ENCODE measurements at regions of chr1 and their contacts with region 1.

Region 1: DNA sequence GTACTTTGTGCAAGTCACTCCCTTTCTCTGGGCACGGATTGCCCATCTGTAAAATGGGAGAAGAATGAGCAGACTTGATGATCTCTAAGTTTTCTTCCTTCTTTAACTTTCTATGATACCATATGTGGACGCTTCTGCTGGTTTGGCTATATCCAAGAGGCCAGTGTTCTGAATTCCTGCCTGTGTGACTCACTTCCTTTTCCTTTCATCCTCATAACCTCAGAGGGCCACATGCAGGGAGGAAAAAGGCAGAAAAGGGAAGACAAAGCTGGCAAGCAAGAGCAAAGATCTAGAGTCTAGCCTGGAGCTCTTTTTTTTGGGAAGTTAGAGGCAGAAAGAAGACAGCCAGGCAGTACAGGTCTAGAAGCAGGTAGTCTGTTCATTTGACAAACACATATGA is 151.2 kb downstream of the OMA1 start:
- DNase-seq: peak; percentile 78
- H3K4me3 ChIP-seq: no peak overlapping the region
- H3K27ac ChIP-seq: peak overlapping the region; percentile 84
- H3K4me1 ChIP-seq: peaks cover 25% of the 10 kb centered on the region
- H3K27me3 ChIP-seq: no peaks in the 10 kb centered on the region
- CTCF ChIP-seq: no peak
- POLR2A ChIP-seq: no peak

Region 2: GRCh38 chr1:58367217-58367616 is 28.1 kb before region 1 on chr1:
- CTCF ChIA-PET with region 1: no interaction called
- POLR2A ChIA-PET with region 1: no interaction called
- dilution Hi-C with region 1: no loop called
- intact Hi-C with region 1: no loop called
- DNase-seq: no peak
- H3K4me3 ChIP-seq: no peak overlapping the region
- H3K27ac ChIP-seq: no peak overlapping the region
- H3K4me1 ChIP-seq: no peaks in the 10 kb centered on the region
- H3K27me3 ChIP-seq: no peaks in the 10 kb centered on the region
- CTCF ChIP-seq: no peak
- POLR2A ChIP-seq: no peak

Region 3: DNA sequence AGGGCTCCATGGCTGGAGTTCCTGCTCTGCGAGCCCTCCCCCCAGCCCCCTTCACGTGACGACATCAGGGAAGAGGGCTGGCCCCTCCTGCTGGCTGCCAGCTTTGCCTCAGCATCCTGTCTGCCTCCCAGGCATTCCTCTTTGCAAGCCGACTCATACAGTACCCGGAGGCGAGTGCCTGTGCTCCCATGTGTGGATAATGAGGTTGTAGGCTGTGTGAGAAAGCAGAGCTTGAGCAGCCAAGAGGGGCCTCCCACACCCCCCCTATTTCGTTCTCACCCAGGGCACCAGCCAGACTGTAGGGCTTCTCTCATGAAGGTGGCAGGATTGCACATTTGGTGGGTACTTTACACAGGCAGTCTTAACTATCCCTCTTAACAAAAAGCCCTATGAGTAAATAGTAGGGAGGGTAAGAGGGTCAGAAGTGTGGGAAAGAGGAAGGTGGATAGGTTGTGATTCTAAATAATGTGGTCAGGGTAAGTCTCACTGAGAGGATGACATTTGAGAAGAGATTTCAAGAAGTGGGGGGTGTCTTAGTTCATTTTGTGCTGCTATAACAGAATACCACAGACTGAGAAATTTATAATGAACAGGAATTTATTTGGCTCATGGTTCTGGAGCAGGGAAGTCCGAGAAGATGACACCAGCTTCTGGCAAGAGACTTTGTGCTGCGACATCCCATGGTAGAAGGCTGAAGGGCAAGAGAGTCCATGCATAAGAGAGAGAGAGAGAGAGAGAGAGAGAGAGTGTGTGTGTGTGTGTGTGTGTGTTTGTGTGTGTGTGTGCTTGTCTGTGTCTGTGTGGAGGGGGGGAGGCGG is 37.7 kb after region 1 on chr1:
- CTCF ChIA-PET with region 1: interaction called, 4 read pairs
- POLR2A ChIA-PET with region 1: no interaction called
- dilution Hi-C with region 1: no loop called
- intact Hi-C with region 1: loop called (anchors 1 kb)
- DNase-seq: peak; percentile 22
- H3K4me3 ChIP-seq: no peak overlapping the region
- H3K27ac ChIP-seq: no peak overlapping the region
- H3K4me1 ChIP-seq: peaks cover 17% of the 10 kb centered on the region
- H3K27me3 ChIP-seq: no peaks in the 10 kb centered on the region
- CTCF ChIP-seq: no peak
- POLR2A ChIP-seq: no peak

Region 4: GRCh38 chr1:58592529-58593134 is 197.3 kb after region 1 on chr1:
- CTCF ChIA-PET with region 1: no interaction called
- POLR2A ChIA-PET with region 1: no interaction called
- dilution Hi-C with region 1: no loop called
- intact Hi-C with region 1: loop called (anchors 5 kb)
- DNase-seq: peak; percentile 98
- H3K4me3 ChIP-seq: no peak overlapping the region
- H3K27ac ChIP-seq: peak overlapping the region; percentile 91
- H3K4me1 ChIP-seq: peaks cover 22% of the 10 kb centered on the region
- H3K27me3 ChIP-seq: no peaks in the 10 kb centered on the region
- CTCF ChIP-seq: no peak
- POLR2A ChIP-seq: peak; percentile 79